Head of caudate nucleus (tissue), 42 donors: ENCODE measurements at regions of chr12 and their contacts with region 1.

Region 1: DNA sequence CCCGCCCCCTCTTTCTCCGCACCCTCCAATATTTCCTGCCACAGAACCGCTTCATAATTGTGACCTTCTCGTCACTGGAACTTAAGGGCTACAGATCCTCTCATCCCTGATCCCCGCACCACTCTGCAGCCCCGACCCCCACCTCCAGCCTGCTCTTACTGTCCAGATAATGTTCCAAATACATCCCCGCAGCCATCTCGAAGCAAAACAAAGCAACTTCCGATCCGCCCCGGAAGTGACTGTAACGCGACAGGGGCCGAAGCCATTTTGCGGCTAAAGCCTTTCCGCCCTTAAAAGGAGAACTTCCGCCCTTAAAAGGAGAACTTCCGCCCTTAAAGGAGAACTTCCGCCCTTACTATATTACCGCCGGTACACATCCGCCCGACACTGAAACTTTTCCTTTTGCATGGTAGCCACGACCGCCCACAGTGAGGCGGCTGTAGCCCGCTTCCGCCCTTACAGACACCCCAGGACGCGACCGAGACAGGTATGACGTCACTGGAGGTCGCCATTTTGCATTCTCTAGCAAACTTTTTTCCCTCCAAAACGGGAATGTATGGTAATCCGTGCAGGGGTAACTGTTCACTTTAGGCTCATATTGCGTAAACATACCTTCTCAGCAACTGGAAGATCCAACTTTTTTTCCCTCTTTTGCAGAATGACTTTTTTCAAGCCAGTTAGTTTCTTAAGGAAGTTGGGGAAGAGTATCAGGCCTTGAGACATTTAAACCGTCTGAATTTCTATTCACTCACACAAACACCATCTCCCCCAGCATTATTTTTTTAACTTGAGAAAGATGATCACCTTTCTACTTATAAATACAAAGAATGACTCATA is at the start of gene ING4:
- DNase-seq: peak; percentile 93 to 100 (median 98)

Region 2: GRCh38 chr12:6613776-6614512 is 49.2 kb before region 1 on chr12:
- intact Hi-C with region 1: loop called (anchors 5 kb)
- DNase-seq: peak; percentile 77 to 97 (median 91)

Region 3: DNA sequence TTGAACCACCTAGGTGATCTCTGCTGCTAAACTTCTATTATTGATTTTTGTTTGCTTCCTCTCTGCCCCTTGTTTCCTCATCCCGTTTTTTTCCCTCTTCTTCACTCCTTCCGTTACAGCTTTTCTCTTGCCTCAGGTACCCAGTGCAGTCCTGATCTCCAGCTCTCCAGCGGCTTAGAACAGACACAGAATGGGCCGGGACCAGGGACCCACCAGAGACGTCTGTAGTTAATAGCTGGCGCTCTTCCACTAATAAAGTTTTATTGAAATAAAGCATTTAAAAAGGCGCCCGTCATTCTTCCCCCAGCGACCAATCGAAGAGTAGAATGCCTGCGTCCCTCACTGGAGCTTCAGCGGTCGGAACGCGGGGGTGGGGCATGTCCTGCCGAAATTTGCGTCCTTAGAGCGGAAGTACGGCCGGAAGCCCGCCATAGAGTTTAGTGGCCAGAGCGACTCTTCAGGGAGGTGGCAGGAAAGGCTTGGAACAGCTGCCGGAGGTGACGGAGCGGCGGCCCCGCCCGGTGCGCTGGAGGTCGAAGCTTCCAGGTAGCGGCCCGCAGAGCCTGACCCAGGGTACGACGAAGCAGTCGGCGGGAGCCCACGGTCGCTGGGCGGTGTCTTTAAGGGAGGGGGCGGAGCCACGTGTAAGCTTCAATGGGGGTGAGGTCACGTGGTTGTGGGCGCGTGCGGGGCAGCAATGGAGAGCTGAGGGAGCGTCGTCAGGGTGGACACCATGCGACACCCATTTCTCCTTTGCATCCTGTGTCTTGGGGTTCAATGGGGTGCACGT is 60.7 kb after region 1 on chr12 and contains the start of gene COPS7A:
- intact Hi-C with region 1: loop called (anchors 2 kb)
- DNase-seq: peak; percentile 96 to 99 (median 99)

Region 4: GRCh38 chr12:6953442-6954315 is 290.6 kb after region 1 on chr12:
- intact Hi-C with region 1: no loop called
- DNase-seq: peak in 20 of 42 donors; percentile 31 to 65 (median 46)